Dendritic cell treated with granulocyte-macrophage colony-stimulating factor and Interleukin-4, amounts not matched to agents 40 ng/mL and 50 ng/mL, for 4 days (primary cell): ENCODE measurements at regions of chr14 and their contacts with region 1.

Region 1: DNA sequence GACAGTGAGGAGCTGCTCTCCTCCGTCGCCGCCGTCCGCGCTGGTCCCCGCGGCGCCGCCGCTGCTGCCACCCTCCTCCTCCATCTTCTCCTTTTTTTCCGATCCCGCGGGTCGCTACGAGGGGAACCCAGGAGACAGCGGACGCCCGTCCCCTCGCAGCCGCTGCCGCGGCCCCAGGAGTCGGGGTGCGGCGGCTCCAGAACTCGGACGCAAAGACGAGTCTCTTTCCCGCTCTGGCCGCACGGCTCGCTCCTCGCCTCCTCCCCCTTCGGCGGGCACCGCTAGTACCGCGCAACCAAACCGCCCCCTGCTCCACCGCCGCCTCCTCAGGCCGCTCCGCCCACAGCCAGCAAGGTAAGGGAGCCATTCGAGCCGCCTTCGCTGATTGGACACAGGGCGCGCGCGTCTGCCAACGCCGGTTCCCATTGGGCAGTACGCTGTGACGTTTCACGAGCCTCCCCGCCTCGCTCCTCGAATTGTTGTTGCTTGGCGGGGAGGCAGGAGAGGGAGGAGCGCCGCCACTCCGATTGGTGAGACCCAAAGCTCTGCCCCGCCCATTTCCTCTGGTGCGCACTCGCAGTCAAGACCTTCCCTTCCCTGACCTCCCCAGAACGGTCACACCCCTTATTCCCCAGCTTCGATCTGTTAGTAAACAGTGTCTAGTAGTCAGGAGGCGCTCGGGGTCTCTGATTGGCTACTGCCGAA is at the start of gene RPS6KA5:
- H3K4me3 Mint-ChIP-seq: peak within 1 kb of the TSS; percentile 78
- H3K27ac Mint-ChIP-seq: no peak within 1 kb of the TSS
- H3K4me1 Mint-ChIP-seq: peaks cover 19% of the 10 kb centered on the region
- H3K27me3 Mint-ChIP-seq: no peaks in the 10 kb centered on the region

Region 2: DNA sequence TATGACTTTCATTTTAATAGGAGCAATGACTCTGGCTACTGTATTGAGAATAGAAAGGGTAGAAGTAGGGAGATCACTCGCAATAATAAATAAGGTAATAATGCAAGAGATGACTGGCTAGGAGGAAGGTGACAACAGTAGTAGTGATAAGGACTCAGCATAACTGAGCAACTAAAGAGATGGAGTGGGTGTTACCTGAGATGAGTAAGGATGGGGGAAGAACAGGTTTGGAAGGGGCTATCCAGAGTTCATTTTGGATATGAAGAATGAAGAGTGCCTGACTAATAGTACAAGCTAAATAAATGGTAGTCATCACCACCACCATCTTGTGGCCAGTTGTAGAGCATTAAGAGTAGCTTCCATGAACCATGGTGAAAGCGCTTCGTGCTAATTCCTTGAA is 101.2 kb before region 1 on chr14:
- intact Hi-C with region 1: no loop called
- H3K4me3 Mint-ChIP-seq: no peak overlapping the region
- H3K27ac Mint-ChIP-seq: no peak overlapping the region
- H3K4me1 Mint-ChIP-seq: no peaks in the 10 kb centered on the region
- H3K27me3 Mint-ChIP-seq: no peaks in the 10 kb centered on the region

Region 3: GRCh38 chr14:91009501-91010152 is 50.9 kb before region 1 on chr14:
- intact Hi-C with region 1: loop called (anchors 5 kb)
- H3K4me3 Mint-ChIP-seq: peak overlapping the region; percentile 67
- H3K27ac Mint-ChIP-seq: peak overlapping the region; percentile 94
- H3K4me1 Mint-ChIP-seq: peaks cover 46% of the 10 kb centered on the region
- H3K27me3 Mint-ChIP-seq: no peaks in the 10 kb centered on the region

Region 4: GRCh38 chr14:91021991-91022621 is 38.4 kb before region 1 on chr14:
- intact Hi-C with region 1: loop called (anchors 2 kb)
- H3K4me3 Mint-ChIP-seq: peak overlapping the region; percentile 39
- H3K27ac Mint-ChIP-seq: peak overlapping the region; percentile 71
- H3K4me1 Mint-ChIP-seq: peaks cover 17% of the 10 kb centered on the region
- H3K27me3 Mint-ChIP-seq: no peaks in the 10 kb centered on the region